Panc1 (cell line): ENCODE measurements at regions of chr11 and their contacts with region 1.

Region 1: GRCh38 chr11:47715082-47715669 is at the start of gene AGBL2:
- DNase-seq: no peak
- ATAC-seq: peak; percentile 96
- H3K4me3 ChIP-seq: peak within 1 kb of the TSS; percentile 65 to 91
- H3K27ac ChIP-seq: peak within 1 kb of the TSS; percentile 95
- H3K4me1 ChIP-seq: peaks cover 6% of the 10 kb centered on the region; the same call in 1 of the 2 replicates
- H3K27me3 ChIP-seq: no peaks in the 10 kb centered on the region
- CTCF ChIP-seq: no peak
- total RNA-seq, gene AGBL2: 6.8 TPM

Region 2: DNA sequence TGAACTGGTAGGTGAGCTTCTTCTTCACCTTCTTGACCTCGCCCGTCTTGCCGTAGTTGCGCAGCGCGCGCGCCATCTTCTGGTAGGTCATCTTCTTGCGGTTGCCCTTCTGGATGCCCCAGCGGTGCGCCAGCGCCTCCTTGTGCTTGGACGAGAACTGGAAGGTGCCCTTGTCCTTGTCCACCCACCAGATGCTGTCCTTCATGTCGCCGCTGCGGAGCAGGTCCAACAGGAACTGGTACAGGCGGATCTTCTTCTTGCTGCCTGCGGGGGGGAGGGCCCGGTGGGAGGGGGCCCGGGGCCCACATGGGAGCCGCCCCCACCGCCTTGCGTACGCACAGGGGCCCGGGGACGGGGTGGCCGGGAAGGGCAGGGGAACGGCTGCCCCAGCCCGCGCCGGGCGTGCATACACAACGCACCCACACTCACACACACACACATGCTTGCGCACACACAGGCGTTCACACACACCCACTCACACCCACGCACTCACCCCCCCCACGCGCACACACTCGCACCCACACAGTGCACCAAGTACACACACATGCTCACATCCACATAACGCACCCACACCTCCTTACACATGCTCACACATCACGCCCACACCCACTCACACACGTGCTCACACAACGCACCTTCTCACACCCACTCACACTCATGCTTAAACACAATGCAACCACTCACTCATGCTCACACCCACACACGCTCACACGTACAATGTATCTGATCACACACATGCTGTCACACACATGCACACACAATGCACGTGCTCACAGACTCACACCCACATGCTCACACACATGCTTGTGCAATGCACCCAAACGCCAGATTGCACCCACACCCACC is 359.7 kb before region 1 on chr11:
- CTCF ChIA-PET with region 1: no interaction called
- POLR2A ChIA-PET with region 1: no interaction called
- in situ Hi-C with region 1: no loop called
- intact Hi-C with region 1: no loop called
- DNase-seq: peak; percentile 79
- ATAC-seq: peak; percentile 96
- H3K4me3 ChIP-seq: peak overlapping the region; percentile 19 to 36
- H3K27ac ChIP-seq: no peak overlapping the region
- H3K4me1 ChIP-seq: no peaks in the 10 kb centered on the region
- H3K27me3 ChIP-seq: no peaks in the 10 kb centered on the region
- CTCF ChIP-seq: peak; percentile 100

Region 3: GRCh38 chr11:47466701-47467250 is 248.4 kb before region 1 on chr11:
- CTCF ChIA-PET with region 1: no interaction called
- POLR2A ChIA-PET with region 1: no interaction called
- in situ Hi-C with region 1: no loop called
- intact Hi-C with region 1: no loop called
- DNase-seq: no peak
- ATAC-seq: peak; percentile 76
- H3K4me3 ChIP-seq: peak overlapping the region in 1 of 2 experiments; percentile 21; a peak in 1 of 4 replicates
- H3K27ac ChIP-seq: peak overlapping the region; percentile 82
- H3K4me1 ChIP-seq: peaks cover 46% of the 10 kb centered on the region
- H3K27me3 ChIP-seq: no peaks in the 10 kb centered on the region
- CTCF ChIP-seq: no peak

Region 4: GRCh38 chr11:47616726-47617416 is 98.3 kb before region 1 on chr11:
- CTCF ChIA-PET with region 1: no interaction called
- POLR2A ChIA-PET with region 1: interaction called, 13 read pairs
- in situ Hi-C with region 1: no loop called
- intact Hi-C with region 1: no loop called
- DNase-seq: peak; percentile 35
- ATAC-seq: peak; percentile 69; the same call in 1 of the 2 replicates
- H3K4me3 ChIP-seq: no peak overlapping the region
- H3K27ac ChIP-seq: no peak overlapping the region
- H3K4me1 ChIP-seq: no peaks in the 10 kb centered on the region
- H3K27me3 ChIP-seq: no peaks in the 10 kb centered on the region
- CTCF ChIP-seq: peak; percentile 79

Region 5: GRCh38 chr11:47642099-47642855 is 72.9 kb before region 1 on chr11 and contains the start of gene MTCH2:
- CTCF ChIA-PET with region 1: no interaction called
- POLR2A ChIA-PET with region 1: interaction called, 11 read pairs
- in situ Hi-C with region 1: no loop called
- intact Hi-C with region 1: loop called (anchors 2 kb)
- DNase-seq: peak; percentile 85
- ATAC-seq: peak; percentile 95
- H3K4me3 ChIP-seq: peak within 1 kb of the TSS; percentile 73 to 88
- H3K27ac ChIP-seq: peak within 1 kb of the TSS; percentile 96
- H3K4me1 ChIP-seq: peaks cover 8% of the 10 kb centered on the region; the same call in 1 of the 2 replicates
- H3K27me3 ChIP-seq: no peaks in the 10 kb centered on the region
- CTCF ChIP-seq: no peak
- total RNA-seq, gene MTCH2: 230 TPM

Region 6: DNA sequence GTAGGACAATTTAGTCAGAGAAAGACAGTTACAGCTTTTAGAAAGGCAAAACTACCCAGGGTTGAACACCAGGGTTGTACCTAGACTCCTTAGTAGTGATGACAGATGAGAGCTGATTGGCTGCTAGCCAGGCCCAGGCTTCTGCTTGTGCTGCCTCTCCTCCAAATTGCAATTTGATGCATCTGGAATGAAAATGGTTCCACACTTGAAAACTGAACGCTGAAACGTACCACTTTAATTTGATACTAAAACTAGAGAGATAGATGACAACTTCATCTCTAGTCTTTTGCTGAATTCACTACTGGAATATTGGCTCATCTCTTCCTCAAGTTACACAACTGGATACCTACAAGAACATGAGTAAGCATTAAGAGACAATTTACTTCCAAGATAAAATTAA is 71.2 kb after region 1 on chr11:
- CTCF ChIA-PET with region 1: no interaction called
- POLR2A ChIA-PET with region 1: no interaction called
- in situ Hi-C with region 1: no loop called
- intact Hi-C with region 1: no loop called
- DNase-seq: no peak
- ATAC-seq: no peak
- H3K4me3 ChIP-seq: no peak overlapping the region
- H3K27ac ChIP-seq: no peak overlapping the region
- H3K4me1 ChIP-seq: no peaks in the 10 kb centered on the region; the same call in 1 of the 2 replicates
- H3K27me3 ChIP-seq: no peaks in the 10 kb centered on the region
- CTCF ChIP-seq: no peak